ENCODE measurements at regions of chr1 and their contacts with region 1.

Region 1: DNA sequence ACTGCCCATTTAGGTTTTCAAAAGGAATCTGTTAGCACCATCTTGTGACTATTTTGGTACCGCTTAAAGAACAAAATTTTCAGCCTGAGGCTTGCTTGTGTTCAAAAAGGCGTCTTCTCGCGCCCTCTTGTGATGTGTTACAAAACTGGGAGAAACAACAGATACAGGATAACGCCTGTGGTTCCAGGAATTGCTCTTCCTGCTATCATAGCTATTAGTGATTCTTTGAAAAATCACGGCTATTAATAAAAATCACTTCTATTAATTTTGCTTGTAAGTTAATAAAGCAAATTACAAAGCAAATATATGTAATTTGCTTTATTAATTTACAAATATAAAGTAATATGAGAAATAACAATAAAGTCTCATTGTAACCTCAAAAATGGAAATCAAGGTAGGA is 82.2 kb upstream of the ABCD3 start:
- DNase-seq: peak; percentile 90
- ATAC-seq: peak; percentile 86
- H3K4me3 ChIP-seq: no peak overlapping the region
- H3K27ac ChIP-seq: no peak overlapping the region
- H3K4me1 ChIP-seq: peaks cover 38% of the 10 kb centered on the region
- H3K27me3 ChIP-seq: no peaks in the 10 kb centered on the region; a peak in 1 of 5 replicates
- CTCF ChIP-seq: peak; percentile 93
- EP300 ChIP-seq: 0 out of 4 replicates have a peak, but pooled peaks of 1 of the 2 experiments have one; percentile 26
- POLR2A ChIP-seq: no peak
- RAD21 ChIP-seq: peak; percentile 95

Region 2: DNA sequence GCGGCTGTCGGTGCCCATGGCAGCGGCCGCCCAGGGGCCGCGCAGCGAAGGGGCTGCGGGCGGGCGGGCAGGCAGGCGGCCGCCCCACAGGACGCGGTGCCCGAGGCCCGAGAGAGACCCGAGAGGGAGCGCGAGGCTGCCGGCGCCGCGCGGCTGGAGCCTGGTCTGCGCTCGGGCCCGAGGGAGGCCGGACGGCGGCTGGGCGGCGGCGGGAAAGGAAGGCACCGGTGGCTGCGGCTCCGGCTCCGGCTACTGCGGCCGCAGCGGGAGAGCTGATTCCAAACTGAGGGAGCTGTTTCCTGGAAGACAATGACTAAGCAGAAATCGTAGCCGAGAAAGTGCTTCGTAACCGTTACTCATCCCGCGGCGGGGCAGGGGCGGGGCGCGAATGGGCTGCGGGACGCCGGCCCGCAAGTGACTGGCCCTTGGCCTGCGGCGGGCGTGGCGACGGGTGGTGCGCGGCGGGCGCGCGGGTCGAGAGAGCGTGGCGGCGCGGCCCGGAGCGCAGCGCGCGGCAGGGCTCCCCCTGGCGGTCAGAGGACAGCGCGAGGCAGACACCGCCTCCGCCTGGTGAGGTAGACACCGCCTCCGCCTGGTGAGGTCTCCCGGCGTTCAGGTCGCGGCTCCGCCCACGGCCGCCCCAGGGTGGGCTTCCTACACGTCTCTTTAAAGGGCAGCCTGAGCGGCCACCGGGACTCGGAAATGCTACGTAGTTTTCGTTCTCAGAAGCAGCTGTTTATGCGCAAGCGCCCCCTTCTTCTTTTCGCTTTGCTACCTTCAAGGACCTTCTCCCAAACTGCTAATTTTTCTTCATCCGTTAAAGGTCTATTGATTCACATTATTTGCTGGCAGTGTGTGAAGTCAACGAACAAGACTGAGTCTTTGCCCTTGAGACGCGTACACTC is 426.6 kb before region 1 on chr1 and contains the start of gene GCLM:
- CTCF ChIA-PET with region 1: no interaction called
- POLR2A ChIA-PET with region 1: no interaction called
- in situ Hi-C with region 1: no loop called
- intact Hi-C with region 1: loop called (anchors 10 kb)
- DNase-seq: peak; percentile 88
- ATAC-seq: peak; percentile 93
- H3K4me3 ChIP-seq: peak within 1 kb of the TSS; percentile 74 to 92 (median 86)
- H3K27ac ChIP-seq: peak within 1 kb of the TSS; percentile 83
- H3K4me1 ChIP-seq: peaks cover 47% of the 10 kb centered on the region
- H3K27me3 ChIP-seq: no peaks in the 10 kb centered on the region; a peak in 1 of 5 replicates
- CTCF ChIP-seq: peak; percentile 91
- EP300 ChIP-seq: peak in 1 of 2 experiments; percentile 28; a peak in 2 of 4 replicates
- POLR2A ChIP-seq: peak in 1 of 2 experiments; percentile 32; a peak in 1 of 4 replicates
- RAD21 ChIP-seq: peak; percentile 94
- total RNA-seq, gene GCLM: 28.1 and 29.9 TPM in 2 replicates

Region 3: DNA sequence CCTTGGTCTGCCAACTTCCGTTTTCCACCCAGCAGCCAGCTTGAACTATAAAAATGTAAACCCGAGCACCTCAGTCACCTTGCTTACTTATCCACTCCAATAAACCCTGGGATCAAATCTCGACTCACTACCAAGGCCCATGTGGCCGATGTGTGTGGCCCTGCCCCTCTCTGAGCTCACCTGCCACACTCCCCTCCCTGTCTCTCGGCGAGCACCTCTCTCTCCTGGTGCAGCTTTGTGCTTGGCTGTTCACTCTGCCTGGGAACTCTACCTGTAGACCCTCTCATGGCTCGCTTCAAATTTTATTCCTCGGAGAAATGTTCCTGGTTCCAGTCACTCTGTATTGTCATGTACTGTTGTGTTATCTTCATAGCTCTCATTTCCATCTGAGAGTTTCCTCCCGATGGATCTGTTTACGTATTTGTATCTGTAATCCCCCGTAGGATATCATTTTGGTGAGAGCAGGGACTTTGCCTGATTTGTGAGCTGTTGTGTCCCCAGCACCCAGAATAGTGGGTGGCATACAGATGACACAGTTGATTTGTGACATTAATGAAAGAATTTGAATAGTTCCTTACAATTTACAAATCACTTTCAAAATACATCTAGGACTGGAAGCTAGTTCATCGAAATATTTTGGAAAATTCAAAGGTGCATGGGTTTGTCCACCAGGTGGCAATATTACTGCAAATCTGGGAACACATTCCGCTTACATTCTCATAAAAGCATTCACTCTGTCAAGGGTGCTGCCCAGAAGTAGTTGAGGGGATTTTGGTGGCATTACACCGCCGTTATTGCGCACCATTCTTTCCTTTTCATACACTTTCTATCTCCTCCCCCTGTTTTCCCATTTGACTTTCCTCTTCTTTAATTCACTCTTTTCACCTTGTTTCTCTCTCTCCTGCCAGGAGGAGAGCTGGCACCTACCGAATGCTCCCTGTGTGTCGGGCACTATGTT is 310.3 kb before region 1 on chr1:
- CTCF ChIA-PET with region 1: interaction called, 44 read pairs
- POLR2A ChIA-PET with region 1: interaction called, 3 read pairs
- in situ Hi-C with region 1: no loop called
- intact Hi-C with region 1: loop called (anchors 1 kb)
- DNase-seq: peak; percentile 69
- ATAC-seq: peak; percentile 36
- H3K4me3 ChIP-seq: peak overlapping the region in 1 of 3 experiments; percentile 45; a peak in 1 of 6 replicates
- H3K27ac ChIP-seq: no peak overlapping the region
- H3K4me1 ChIP-seq: peaks cover 82% of the 10 kb centered on the region
- H3K27me3 ChIP-seq: peaks cover 0 to 6% of the 10 kb centered on the region in 2 experiments; a peak in 3 of 5 replicates
- CTCF ChIP-seq: peak; percentile 79
- EP300 ChIP-seq: no peak
- POLR2A ChIP-seq: no peak
- RAD21 ChIP-seq: peak; percentile 80

Region 4: DNA sequence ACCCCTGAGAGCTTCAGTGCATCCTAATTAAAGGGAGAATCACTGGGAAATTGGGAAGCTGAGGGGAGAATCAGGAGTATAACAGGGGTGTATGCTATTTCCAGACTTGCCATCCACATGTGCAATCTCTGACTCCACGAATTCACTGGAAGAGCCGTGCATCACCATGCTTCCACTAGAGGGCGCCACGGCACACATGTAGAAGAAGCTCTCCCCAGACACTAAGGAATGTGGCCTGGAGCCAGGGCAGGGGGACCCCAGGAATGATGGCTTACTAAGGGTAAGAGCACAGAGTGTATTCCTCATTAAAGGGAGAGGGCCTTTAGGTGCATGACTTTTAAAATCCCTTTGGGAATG is 296.5 kb before region 1 on chr1:
- CTCF ChIA-PET with region 1: interaction called, 25 read pairs
- POLR2A ChIA-PET with region 1: interaction called, 18 read pairs
- in situ Hi-C with region 1: no loop called
- intact Hi-C with region 1: no loop called
- DNase-seq: peak; percentile 75
- ATAC-seq: peak; percentile 73
- H3K4me3 ChIP-seq: no peak overlapping the region
- H3K27ac ChIP-seq: no peak overlapping the region
- H3K4me1 ChIP-seq: peaks cover 39% of the 10 kb centered on the region
- H3K27me3 ChIP-seq: no peaks in the 10 kb centered on the region
- CTCF ChIP-seq: peak; percentile 91
- EP300 ChIP-seq: no peak
- POLR2A ChIP-seq: no peak
- RAD21 ChIP-seq: peak; percentile 72

Region 5: DNA sequence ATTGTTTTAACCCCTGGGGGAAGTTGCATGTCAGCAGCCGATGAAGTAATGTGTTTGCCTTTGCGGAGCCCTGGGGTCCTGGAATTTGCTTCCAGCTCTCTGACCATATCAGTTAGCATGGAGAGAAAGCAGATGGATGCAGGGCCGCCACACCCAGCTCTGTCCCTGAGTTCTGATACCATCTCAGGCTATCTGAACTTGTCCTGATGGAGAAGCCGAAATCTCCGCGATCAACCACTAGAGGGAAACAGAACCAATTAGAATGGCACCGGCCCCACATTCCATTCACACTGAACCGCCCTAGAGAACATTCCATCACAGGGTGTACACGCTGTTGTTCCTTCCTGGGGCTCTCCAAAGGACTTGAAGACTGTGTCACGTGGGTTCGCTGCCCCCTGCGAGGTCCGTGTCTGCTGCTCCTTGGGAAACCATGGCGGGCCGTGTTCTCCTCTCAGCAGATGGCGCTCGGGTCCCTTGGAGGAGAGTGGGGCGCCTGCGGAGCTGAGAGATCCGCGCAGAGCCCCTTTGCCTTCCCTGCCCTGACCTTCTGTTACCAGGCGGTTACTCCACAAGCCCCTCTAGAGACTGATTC is 290.4 kb before region 1 on chr1:
- CTCF ChIA-PET with region 1: interaction called, 25 read pairs
- POLR2A ChIA-PET with region 1: interaction called, 18 read pairs
- in situ Hi-C with region 1: loop called (anchors 5 kb)
- intact Hi-C with region 1: loop called (anchors 1 kb)
- DNase-seq: peak; percentile 83
- ATAC-seq: peak; percentile 78
- H3K4me3 ChIP-seq: peak overlapping the region; percentile 14 to 71 (median 17); a peak in 5 of 6 replicates
- H3K27ac ChIP-seq: no peak overlapping the region
- H3K4me1 ChIP-seq: peaks cover 52% of the 10 kb centered on the region
- H3K27me3 ChIP-seq: no peaks in the 10 kb centered on the region
- CTCF ChIP-seq: peak; percentile 89
- EP300 ChIP-seq: no peak
- POLR2A ChIP-seq: no peak
- RAD21 ChIP-seq: peak; percentile 87

Region 6: DNA sequence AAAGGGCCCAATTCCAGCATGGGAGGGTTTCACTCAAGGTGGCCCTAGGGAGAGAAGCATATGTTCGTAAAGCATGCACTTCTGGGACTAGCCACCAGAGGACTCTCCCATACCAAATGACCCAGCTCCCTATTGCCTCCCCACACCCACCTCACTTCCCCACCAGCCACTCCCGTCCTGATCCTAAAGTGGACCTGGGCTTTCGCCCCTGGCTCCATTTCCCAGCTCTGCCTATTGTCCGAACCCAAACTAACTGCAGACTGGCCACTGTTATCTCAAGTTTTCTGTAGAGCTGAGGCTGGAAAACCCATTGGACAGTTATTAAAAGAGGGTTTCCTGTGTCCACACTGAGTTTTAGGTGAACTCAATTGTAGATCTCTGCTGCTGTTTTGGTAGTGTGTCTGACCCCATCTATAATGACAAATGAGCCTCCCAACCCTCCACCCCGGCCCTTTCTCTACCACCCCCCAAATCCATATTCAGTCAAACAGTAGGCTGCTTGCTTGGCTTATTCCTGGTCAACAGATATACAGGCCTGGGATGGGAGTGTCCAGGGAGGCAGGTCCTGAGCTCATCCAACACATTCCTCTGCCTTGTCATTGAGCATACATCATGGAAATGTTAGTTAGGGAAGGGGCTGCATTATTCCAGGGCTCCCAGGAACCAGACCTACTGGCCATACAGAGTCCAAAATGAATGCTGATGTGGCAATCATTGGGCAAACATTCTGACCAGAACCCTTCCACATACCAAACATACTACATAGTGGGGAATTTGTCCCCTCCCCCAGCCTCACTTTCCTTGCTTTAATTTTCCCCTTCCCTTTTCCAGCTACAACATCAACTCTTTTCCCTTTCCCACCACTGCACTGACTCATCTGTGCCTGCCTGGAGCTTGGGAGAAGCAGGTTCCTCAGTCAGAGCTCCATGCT is 274.2 kb before region 1 on chr1:
- CTCF ChIA-PET with region 1: interaction called, 22 read pairs
- POLR2A ChIA-PET with region 1: interaction called, 8 read pairs
- in situ Hi-C with region 1: no loop called
- intact Hi-C with region 1: loop called (anchors 1 kb)
- DNase-seq: peak; percentile 97
- ATAC-seq: peak; percentile 91
- H3K4me3 ChIP-seq: peak overlapping the region; percentile 14 to 58 (median 52); a peak in 5 of 6 replicates
- H3K27ac ChIP-seq: peak overlapping the region; percentile 63
- H3K4me1 ChIP-seq: peaks cover 57% of the 10 kb centered on the region
- H3K27me3 ChIP-seq: no peaks in the 10 kb centered on the region
- CTCF ChIP-seq: peak; percentile 95
- EP300 ChIP-seq: peak in 1 of 2 experiments; percentile 56; a peak in 1 of 4 replicates
- POLR2A ChIP-seq: no peak
- RAD21 ChIP-seq: peak; percentile 96

Region 7: DNA sequence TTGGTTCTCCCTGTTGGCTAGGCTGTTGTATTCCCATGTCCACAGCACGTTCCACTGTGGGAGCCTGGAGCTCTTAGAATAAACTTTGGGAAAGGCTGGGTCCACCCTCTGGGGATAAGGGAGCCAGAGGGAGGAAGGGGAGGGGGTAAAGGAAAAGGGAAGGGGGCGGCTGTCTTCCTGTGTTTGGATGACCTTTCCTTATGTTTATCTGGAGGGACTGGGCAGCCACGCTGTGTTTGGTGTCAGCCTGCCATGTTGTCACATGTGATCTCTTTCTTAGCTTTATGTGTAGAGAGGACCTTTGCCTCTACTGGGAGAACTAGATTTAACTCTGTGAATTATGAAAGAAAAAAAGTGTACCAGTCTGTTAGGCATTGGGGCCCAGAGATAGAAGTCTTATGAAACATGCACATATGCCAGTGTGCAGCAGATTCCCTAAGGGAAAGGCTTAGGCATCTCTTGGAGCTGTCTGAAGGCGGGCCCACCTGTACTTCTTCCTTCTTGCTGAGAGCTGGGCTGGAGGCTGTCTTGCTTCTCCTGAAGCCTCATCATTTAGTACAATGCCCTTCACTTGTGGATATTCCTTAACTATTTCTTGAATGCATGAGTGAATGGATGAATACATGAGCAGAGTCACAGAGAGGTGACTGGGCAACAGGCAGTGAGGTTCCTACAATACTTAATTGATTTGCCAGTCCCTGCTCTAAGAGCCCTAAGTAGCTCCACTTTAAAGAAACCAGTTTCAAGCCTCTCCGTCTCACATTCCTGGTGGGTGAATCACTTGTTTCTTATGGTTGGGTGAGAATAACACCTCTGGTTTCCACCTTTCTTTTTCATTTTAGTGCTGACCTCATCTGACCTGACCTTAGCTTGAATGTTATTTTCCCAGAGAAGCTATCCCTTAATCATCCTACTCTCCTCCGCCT is 36.1 kb before region 1 on chr1:
- CTCF ChIA-PET with region 1: no interaction called
- POLR2A ChIA-PET with region 1: no interaction called
- in situ Hi-C with region 1: no loop called
- intact Hi-C with region 1: no loop called
- DNase-seq: peak; percentile 41
- ATAC-seq: no peak; the same call in 2 of the 3 replicates
- H3K4me3 ChIP-seq: no peak overlapping the region
- H3K27ac ChIP-seq: peak overlapping the region; percentile 11
- H3K4me1 ChIP-seq: peaks cover 59% of the 10 kb centered on the region
- H3K27me3 ChIP-seq: no peaks in the 10 kb centered on the region
- CTCF ChIP-seq: no peak
- EP300 ChIP-seq: 0 out of 4 replicates have a peak, but pooled peaks of 1 of the 2 experiments have one; percentile 16
- POLR2A ChIP-seq: no peak
- RAD21 ChIP-seq: no peak

Region 8: DNA sequence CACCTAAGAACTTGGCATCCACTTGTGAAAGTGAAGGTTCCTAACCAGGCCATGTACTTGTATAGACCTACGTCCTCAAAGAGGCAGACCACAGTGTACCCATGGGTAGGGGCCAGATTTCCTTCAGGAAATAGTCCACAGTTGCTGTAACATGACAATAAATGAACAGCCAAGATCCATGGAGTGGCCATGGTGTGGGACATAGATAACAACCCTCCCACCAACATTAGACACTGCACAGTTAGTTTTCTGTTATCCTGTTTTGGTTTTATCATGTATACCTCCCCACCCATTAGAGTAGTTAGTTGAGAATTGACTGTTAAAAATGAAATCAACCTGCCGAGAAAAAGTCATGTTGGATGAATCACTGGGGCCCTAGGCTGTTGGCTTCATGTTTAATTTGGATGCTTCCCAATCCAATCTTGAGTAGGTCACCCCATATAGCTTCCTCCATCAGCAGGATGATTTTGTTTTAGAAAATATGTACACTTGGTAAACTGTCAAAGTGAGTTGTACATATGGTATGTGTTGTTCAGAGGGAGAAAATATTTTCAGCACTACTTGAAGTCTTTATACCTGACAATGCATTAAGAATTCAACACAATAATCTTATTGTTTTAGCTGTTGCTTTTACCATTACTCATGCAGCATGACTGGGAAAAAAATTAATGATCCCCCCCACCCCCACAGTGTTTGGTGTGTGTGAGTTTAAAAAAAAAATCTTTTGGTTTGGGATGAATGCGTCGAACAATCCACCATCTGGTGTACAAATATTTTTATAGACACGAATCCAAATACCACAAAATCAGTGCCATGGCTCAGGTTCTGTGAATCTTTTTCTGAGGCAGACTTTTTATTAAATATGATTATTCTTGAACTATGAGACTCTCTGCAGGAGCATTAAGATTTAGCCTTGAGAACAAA is 10.3 kb before region 1 on chr1:
- CTCF ChIA-PET with region 1: no interaction called
- POLR2A ChIA-PET with region 1: no interaction called
- in situ Hi-C with region 1: no loop called
- intact Hi-C with region 1: no loop called
- DNase-seq: peak; percentile 75
- ATAC-seq: peak; percentile 44; the same call in 2 of the 3 replicates
- H3K4me3 ChIP-seq: no peak overlapping the region
- H3K27ac ChIP-seq: peak overlapping the region; percentile 6
- H3K4me1 ChIP-seq: peaks cover 55% of the 10 kb centered on the region
- H3K27me3 ChIP-seq: no peaks in the 10 kb centered on the region
- CTCF ChIP-seq: no peak
- EP300 ChIP-seq: no peak
- POLR2A ChIP-seq: no peak
- RAD21 ChIP-seq: no peak

Region 9: GRCh38 chr1:94398356-94398755 is 62.4 kb after region 1 on chr1:
- CTCF ChIA-PET with region 1: no interaction called
- POLR2A ChIA-PET with region 1: no interaction called
- in situ Hi-C with region 1: no loop called
- intact Hi-C with region 1: no loop called
- DNase-seq: no peak
- ATAC-seq: no peak
- H3K4me3 ChIP-seq: no peak overlapping the region
- H3K27ac ChIP-seq: no peak overlapping the region
- H3K4me1 ChIP-seq: peaks cover 27% of the 10 kb centered on the region
- H3K27me3 ChIP-seq: no peaks in the 10 kb centered on the region; a peak in 1 of 5 replicates
- CTCF ChIP-seq: no peak
- EP300 ChIP-seq: no peak
- POLR2A ChIP-seq: no peak
- RAD21 ChIP-seq: no peak

Region 10: DNA sequence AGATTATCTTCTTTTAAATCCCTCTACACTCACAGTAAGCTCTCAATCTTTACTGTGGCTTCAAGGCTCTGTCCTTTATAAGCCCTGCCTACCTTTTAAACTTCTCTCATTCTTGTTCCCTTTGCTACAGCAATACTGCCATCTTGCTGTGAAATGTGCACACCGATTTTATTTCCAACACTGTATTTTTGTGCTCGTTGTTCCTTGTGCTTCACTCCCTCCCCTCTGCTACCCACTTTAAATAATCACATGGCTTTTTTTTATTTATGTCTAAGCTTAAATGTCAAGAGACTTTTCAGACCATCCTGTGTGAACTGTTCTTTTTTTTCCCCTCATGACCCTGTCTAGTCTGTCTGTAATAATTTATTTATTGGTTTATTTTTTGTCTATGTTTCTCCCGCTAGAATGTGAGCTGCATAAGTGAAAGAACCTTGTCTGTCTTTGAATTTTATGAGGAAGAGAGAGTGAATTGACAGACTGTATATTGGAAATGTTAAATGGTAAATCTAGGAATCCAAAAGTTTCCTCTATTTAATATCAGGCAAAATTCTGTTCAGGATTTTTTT is 127.9 kb after region 1 on chr1:
- CTCF ChIA-PET with region 1: interaction called, 9 read pairs
- POLR2A ChIA-PET with region 1: no interaction called
- in situ Hi-C with region 1: no loop called
- intact Hi-C with region 1: loop called (anchors 1 kb)
- DNase-seq: peak; percentile 71
- ATAC-seq: peak; percentile 91
- H3K4me3 ChIP-seq: no peak overlapping the region
- H3K27ac ChIP-seq: peak overlapping the region; percentile 3
- H3K4me1 ChIP-seq: peaks cover 35% of the 10 kb centered on the region
- H3K27me3 ChIP-seq: no peaks in the 10 kb centered on the region
- CTCF ChIP-seq: peak; percentile 85
- EP300 ChIP-seq: no peak
- POLR2A ChIP-seq: no peak
- RAD21 ChIP-seq: peak; percentile 79

Measured in HepG2 (cell line).